ENCODE measurements at regions of chr20 and their contacts with region 1.

Region 1: GRCh38 chr20:62937366-62938104 is 412 bp upstream of the GID8 start:
- DNase-seq: peak; percentile 97
- H3K4me3 ChIP-seq: peak overlapping the region; percentile 84 to 86
- H3K27ac ChIP-seq: peak overlapping the region; percentile 83 to 89
- H3K4me1 ChIP-seq: peaks cover 11 to 21% of the 10 kb centered on the region in 2 experiments
- H3K27me3 ChIP-seq: no peaks in the 10 kb centered on the region
- CTCF ChIP-seq: no peak
- EP300 ChIP-seq: no peak
- RAD21 ChIP-seq: no peak

Region 2: DNA sequence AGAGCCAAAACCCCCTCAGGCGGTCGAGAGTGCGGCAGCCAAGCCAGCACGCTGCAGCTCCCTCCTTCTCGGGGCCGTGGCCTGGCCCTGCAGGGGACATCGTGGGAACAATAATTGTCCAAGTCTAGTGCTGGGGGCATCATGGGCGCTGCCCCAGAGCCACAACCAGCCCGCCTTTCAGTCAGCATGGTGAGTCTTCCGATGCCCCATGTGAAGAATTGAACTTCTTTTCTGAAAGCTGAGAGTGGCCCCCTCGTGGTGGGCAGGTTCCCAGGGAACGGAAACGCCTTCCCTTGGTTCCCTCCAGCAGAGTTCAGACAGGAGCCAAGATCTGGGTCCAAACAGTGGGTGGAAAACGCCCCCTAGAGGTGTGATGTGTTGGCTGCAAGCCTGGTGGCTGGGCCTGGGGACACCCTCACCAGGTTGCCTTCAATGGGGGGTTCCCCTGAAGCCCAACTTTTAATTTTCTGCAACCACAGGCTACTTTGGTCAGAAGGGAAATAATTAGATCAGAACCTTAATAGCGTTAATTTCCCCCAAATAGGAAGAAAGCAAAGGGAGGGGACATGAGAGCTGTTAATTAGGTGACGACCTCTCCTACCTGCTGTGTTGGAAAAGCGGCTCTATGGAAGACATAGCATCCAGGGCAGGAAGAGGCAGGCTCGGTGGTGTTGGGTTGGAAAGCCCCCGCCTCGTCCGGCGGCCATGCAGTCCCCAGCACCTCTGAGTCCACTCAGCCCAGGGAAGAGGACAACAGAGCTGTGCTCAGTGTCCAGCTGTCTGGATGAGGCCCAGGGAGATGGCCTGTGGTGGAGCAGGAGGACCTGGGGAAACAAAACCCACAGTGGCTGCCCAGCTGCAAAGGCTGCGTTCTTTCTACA is 146.0 kb before region 1 on chr20:
- CTCF ChIA-PET with region 1: no interaction called
- POLR2A ChIA-PET with region 1: no interaction called
- DNase-seq: peak; percentile 86
- H3K4me3 ChIP-seq: peak overlapping the region in 1 of 2 experiments; percentile 43; a peak in 1 of 4 replicates
- H3K27ac ChIP-seq: peak overlapping the region in 1 of 2 experiments; percentile 7; a peak in 1 of 4 replicates
- H3K4me1 ChIP-seq: peaks cover 16 to 22% of the 10 kb centered on the region in 2 experiments; a peak in 3 of 4 replicates
- H3K27me3 ChIP-seq: no peaks in the 10 kb centered on the region
- CTCF ChIP-seq: peak; percentile 99
- EP300 ChIP-seq: no peak
- RAD21 ChIP-seq: peak; percentile 99

Region 3: DNA sequence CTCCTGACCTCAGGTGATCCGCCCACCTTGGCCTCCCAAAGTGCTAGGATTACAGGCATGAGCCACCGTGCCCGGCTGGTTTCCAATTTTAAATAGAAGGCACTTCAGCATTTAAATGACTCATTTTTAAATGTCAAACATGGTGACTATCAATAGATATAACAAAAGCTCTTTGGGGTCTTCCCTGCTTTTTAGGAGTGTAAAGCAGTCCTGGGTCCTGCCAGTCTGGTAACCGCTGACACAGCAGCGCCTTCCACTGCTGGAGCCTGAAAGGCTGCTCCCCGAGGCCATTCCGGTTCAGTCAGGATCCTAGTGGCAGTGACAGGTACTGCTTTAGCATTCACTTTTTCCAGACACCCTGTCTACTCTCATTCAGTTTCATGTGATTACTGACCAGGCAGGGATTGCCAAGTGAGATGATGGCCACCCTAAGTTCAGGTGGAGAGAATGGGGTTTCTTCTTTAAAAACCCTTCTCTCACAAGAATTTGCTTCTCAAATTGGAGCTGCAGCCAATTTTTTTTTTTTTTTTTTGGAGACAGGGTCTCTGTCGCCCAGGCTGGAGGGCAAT is 16.3 kb before region 1 on chr20:
- CTCF ChIA-PET with region 1: interaction called, 50 read pairs
- POLR2A ChIA-PET with region 1: interaction called, 3 read pairs
- DNase-seq: peak; percentile 81
- H3K4me3 ChIP-seq: no peak overlapping the region
- H3K27ac ChIP-seq: peak overlapping the region in 1 of 2 experiments; percentile 35; a peak in 1 of 4 replicates
- H3K4me1 ChIP-seq: peaks cover 26 to 37% of the 10 kb centered on the region in 2 experiments; a peak in 3 of 4 replicates
- H3K27me3 ChIP-seq: no peaks in the 10 kb centered on the region
- CTCF ChIP-seq: peak; percentile 65
- EP300 ChIP-seq: 0 out of 4 replicates have a peak, but pooled peaks of 1 of the 2 experiments have one; percentile 16
- RAD21 ChIP-seq: peak; percentile 50

Region 4: GRCh38 chr20:62926239-62927104 is 11.1 kb before region 1 on chr20 and contains the start of gene DIDO1:
- CTCF ChIA-PET with region 1: interaction called, 50 read pairs
- POLR2A ChIA-PET with region 1: interaction called, 8 read pairs
- DNase-seq: peak; percentile 99
- H3K4me3 ChIP-seq: peak within 1 kb of the TSS; percentile 86 to 95
- H3K27ac ChIP-seq: peak within 1 kb of the TSS; percentile 86 to 88
- H3K4me1 ChIP-seq: peaks cover 15 to 27% of the 10 kb centered on the region in 2 experiments; a peak in 3 of 4 replicates
- H3K27me3 ChIP-seq: no peaks in the 10 kb centered on the region
- CTCF ChIP-seq: peak; percentile 56
- EP300 ChIP-seq: no peak
- RAD21 ChIP-seq: no peak
- polyA plus RNA-seq, gene DIDO1: 14.7 and 15.6 TPM in 2 replicates

Measured in SK-N-SH (cell line).